CD8-positive, alpha-beta T cell (primary cell): ENCODE measurements at regions of chr2 and their contacts with region 1.

Region 1: DNA sequence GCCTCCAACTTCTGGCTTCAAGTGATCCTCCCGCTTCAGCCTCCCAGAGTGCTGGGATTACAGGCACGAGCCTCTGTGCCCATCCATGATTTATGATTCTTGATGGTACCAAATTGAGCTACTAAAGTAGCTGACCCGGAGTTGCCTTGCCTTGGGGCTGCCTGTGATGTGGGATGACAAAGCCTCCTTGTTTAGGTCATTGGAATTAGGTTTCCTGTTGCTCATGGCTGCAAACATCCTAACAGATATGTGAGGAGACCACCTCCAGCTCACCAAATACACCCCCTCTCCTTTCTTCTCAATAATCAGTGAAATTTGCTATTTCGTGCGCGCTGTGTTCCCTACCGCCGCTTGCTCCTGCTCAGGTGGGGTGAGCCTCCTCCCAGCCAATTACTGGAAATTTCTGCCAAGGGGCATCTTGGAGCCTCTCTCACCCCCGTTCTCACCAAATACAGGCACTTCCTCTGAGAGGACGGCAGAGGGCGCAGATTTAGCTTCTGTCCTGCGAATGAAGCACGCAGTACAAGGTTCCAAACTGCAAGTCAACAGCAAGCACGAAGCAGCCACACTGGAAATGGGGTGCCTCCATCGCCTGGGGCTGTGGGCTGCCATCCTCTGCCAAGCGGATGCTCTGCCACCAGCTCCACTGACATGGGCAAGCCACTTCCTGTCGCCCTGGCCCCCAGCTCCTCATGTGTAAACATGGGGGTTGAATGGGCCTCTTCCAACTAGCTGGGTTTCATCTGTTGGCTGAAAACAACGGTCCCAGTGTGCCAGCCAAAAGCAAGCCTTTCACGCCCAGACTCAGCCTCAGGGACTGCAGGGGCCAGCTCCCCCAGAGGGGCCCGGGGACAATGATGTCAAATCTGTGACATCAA is 71.7 kb downstream of the NCAPH start:
- DNase-seq: peak; percentile 55 to 94 (median 79)
- ATAC-seq: peak; percentile 93
- H3K4me3 ChIP-seq: peak overlapping the region in 1 of 2 experiments; percentile 33
- H3K4me3 Mint-ChIP-seq: peak overlapping the region; percentile 72
- H3K27ac ChIP-seq: peak overlapping the region; percentile 48 to 58
- H3K27ac Mint-ChIP-seq: peak overlapping the region; percentile 97
- H3K4me1 ChIP-seq: peaks cover 36% of the 10 kb centered on the region
- H3K4me1 Mint-ChIP-seq: peaks cover 51% of the 10 kb centered on the region
- H3K27me3 ChIP-seq: no peaks in the 10 kb centered on the region
- H3K27me3 Mint-ChIP-seq: no peaks in the 10 kb centered on the region
- CTCF ChIP-seq: peak; percentile 71

Region 2: DNA sequence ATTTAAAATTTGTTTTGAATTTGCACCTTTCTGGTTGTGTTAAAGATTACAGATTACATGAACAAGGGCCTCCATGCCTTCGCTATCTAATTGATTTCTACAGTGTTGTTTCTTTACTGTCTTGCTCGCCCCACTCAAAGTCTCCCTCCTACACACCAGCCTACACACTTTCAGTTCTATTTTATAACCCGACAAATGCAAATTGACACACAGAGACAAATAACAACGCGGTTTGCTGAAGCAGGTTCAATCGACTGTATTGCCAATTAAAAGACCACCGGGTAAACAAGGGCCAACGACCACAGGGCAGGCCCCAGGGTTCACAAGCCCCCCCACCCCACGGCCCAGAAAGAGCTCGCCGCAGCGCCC is 199.5 kb before region 1 on chr2:
- CTCF ChIA-PET with region 1: no interaction called
- POLR2A ChIA-PET with region 1: no interaction called
- intact Hi-C with region 1: no loop called
- DNase-seq: peak in 2 of 9 experiments; percentile 2 to 58
- ATAC-seq: no peak
- H3K4me3 ChIP-seq: peak overlapping the region; percentile 91
- H3K4me3 Mint-ChIP-seq: peak overlapping the region; percentile 100
- H3K27ac ChIP-seq: peak overlapping the region; percentile 75
- H3K27ac Mint-ChIP-seq: peak overlapping the region; percentile 99
- H3K4me1 ChIP-seq: peaks cover 57% of the 10 kb centered on the region
- H3K4me1 Mint-ChIP-seq: peaks cover 60% of the 10 kb centered on the region
- H3K27me3 ChIP-seq: no peaks in the 10 kb centered on the region
- H3K27me3 Mint-ChIP-seq: no peaks in the 10 kb centered on the region
- CTCF ChIP-seq: no peak

Region 3: GRCh38 chr2:96320728-96321622 is 86.3 kb before region 1 on chr2:
- CTCF ChIA-PET with region 1: no interaction called
- POLR2A ChIA-PET with region 1: interaction called, 9 read pairs
- intact Hi-C with region 1: loop called in 1 of 2 experiments (anchors 1 kb)
- DNase-seq: peak in 2 of 9 experiments; percentile 26 to 38
- ATAC-seq: no peak
- H3K4me3 ChIP-seq: peak overlapping the region; percentile 81 to 85
- H3K4me3 Mint-ChIP-seq: peak overlapping the region; percentile 92
- H3K27ac ChIP-seq: peak overlapping the region; percentile 38 to 71
- H3K27ac Mint-ChIP-seq: peak overlapping the region; percentile 90
- H3K4me1 ChIP-seq: peaks cover 28% of the 10 kb centered on the region
- H3K4me1 Mint-ChIP-seq: peaks cover 55% of the 10 kb centered on the region
- H3K27me3 ChIP-seq: no peaks in the 10 kb centered on the region
- H3K27me3 Mint-ChIP-seq: no peaks in the 10 kb centered on the region
- CTCF ChIP-seq: no peak

Region 4: GRCh38 chr2:96470636-96471035 is 63.4 kb after region 1 on chr2:
- CTCF ChIA-PET with region 1: interaction called, 4 read pairs
- POLR2A ChIA-PET with region 1: no interaction called
- intact Hi-C with region 1: loop called (anchors 2 to 5 kb)
- DNase-seq: peak in 8 of 9 experiments; percentile 36 to 66 (median 58)
- ATAC-seq: peak; percentile 73
- H3K4me3 ChIP-seq: no peak overlapping the region
- H3K4me3 Mint-ChIP-seq: no peak overlapping the region
- H3K27ac ChIP-seq: no peak overlapping the region
- H3K27ac Mint-ChIP-seq: no peak overlapping the region
- H3K4me1 ChIP-seq: peaks cover 4% of the 10 kb centered on the region
- H3K4me1 Mint-ChIP-seq: peaks cover 2% of the 10 kb centered on the region
- H3K27me3 ChIP-seq: no peaks in the 10 kb centered on the region
- H3K27me3 Mint-ChIP-seq: peaks cover 6% of the 10 kb centered on the region
- CTCF ChIP-seq: peak; percentile 64

Region 5: GRCh38 chr2:96509114-96509846 is 102.0 kb after region 1 on chr2:
- CTCF ChIA-PET with region 1: interaction called, 85 read pairs
- POLR2A ChIA-PET with region 1: interaction called, 10 read pairs
- intact Hi-C with region 1: loop called (anchors 1 kb)
- DNase-seq: peak in 8 of 9 experiments; percentile 35 to 73 (median 56)
- ATAC-seq: no peak
- H3K4me3 ChIP-seq: no peak overlapping the region
- H3K4me3 Mint-ChIP-seq: no peak overlapping the region
- H3K27ac ChIP-seq: no peak overlapping the region
- H3K27ac Mint-ChIP-seq: no peak overlapping the region
- H3K4me1 ChIP-seq: peaks cover 17% of the 10 kb centered on the region
- H3K4me1 Mint-ChIP-seq: peaks cover 10% of the 10 kb centered on the region
- H3K27me3 ChIP-seq: peaks cover 0 to 5% of the 10 kb centered on the region in 2 experiments
- H3K27me3 Mint-ChIP-seq: peaks cover 13% of the 10 kb centered on the region
- CTCF ChIP-seq: peak; percentile 45

Region 6: GRCh38 chr2:96554293-96555145 is 147.2 kb after region 1 on chr2:
- CTCF ChIA-PET with region 1: interaction called, 31 read pairs
- POLR2A ChIA-PET with region 1: interaction called, 13 read pairs
- intact Hi-C with region 1: loop called (anchors 1 kb)
- DNase-seq: peak; percentile 46 to 86 (median 71)
- ATAC-seq: peak; percentile 60
- H3K4me3 ChIP-seq: peak overlapping the region in 1 of 2 experiments; percentile 1
- H3K4me3 Mint-ChIP-seq: peak overlapping the region; percentile 29
- H3K27ac ChIP-seq: no peak overlapping the region
- H3K27ac Mint-ChIP-seq: peak overlapping the region; percentile 62
- H3K4me1 ChIP-seq: peaks cover 16% of the 10 kb centered on the region
- H3K4me1 Mint-ChIP-seq: peaks cover 17% of the 10 kb centered on the region
- H3K27me3 ChIP-seq: no peaks in the 10 kb centered on the region
- H3K27me3 Mint-ChIP-seq: no peaks in the 10 kb centered on the region
- CTCF ChIP-seq: peak; percentile 86